Natural killer cell (primary cell): ENCODE measurements at regions of chr6 and their contacts with region 1.

Region 1: DNA sequence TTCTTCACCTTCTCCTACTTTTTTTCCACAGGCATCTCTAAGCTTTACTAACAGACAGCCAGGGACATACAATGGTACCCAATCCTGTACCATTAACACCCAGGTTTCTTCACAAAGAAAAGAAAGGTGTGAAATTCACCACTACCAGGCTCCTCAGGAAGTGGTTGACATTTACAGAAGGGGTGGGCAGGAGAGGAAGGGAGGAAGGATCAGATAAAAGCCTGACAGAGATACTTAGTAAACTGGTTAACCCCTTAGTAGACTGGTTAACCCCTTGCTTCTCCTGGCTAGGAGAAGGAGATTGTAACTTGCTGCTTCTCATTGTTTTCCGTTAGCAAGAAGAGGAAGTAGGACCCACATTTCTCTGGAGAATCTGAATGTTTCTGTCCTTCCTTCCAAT is 7.2 kb downstream of the SAMD3 start:
- DNase-seq: peak in 1 of 2 donors; percentile 81
- ATAC-seq: peak; percentile 74 to 88 (median 88)
- H3K4me3 ChIP-seq: peak overlapping the region; percentile 52
- H3K4me3 Mint-ChIP-seq: peak overlapping the region; percentile 94
- H3K27ac ChIP-seq: peak overlapping the region; percentile 58
- H3K27ac Mint-ChIP-seq: peak overlapping the region; percentile 89 to 90
- H3K4me1 ChIP-seq: peaks cover 19% of the 10 kb centered on the region
- H3K4me1 Mint-ChIP-seq: peaks cover 69 to 74% of the 10 kb centered on the region in 2 donors
- H3K27me3 ChIP-seq: no peaks in the 10 kb centered on the region
- H3K27me3 Mint-ChIP-seq: no peaks in the 10 kb centered on the region
- CTCF ChIP-seq: no peak

Region 2: GRCh38 chr6:130183271-130184222 is 32.0 kb before region 1 on chr6:
- intact Hi-C with region 1: loop called (anchors 5 kb)
- DNase-seq: peak; percentile 29 to 75
- ATAC-seq: peak; percentile 84 to 94 (median 90)
- H3K4me3 ChIP-seq: no peak overlapping the region
- H3K4me3 Mint-ChIP-seq: peak overlapping the region; percentile 59
- H3K27ac ChIP-seq: peak overlapping the region; percentile 78
- H3K27ac Mint-ChIP-seq: peak overlapping the region; percentile 85 to 89
- H3K4me1 ChIP-seq: peaks cover 29% of the 10 kb centered on the region
- H3K4me1 Mint-ChIP-seq: peaks cover 72 to 75% of the 10 kb centered on the region in 2 donors
- H3K27me3 ChIP-seq: no peaks in the 10 kb centered on the region
- H3K27me3 Mint-ChIP-seq: no peaks in the 10 kb centered on the region
- CTCF ChIP-seq: no peak